ENCODE measurements at regions of chr1 and their contacts with region 1.

Region 1: DNA sequence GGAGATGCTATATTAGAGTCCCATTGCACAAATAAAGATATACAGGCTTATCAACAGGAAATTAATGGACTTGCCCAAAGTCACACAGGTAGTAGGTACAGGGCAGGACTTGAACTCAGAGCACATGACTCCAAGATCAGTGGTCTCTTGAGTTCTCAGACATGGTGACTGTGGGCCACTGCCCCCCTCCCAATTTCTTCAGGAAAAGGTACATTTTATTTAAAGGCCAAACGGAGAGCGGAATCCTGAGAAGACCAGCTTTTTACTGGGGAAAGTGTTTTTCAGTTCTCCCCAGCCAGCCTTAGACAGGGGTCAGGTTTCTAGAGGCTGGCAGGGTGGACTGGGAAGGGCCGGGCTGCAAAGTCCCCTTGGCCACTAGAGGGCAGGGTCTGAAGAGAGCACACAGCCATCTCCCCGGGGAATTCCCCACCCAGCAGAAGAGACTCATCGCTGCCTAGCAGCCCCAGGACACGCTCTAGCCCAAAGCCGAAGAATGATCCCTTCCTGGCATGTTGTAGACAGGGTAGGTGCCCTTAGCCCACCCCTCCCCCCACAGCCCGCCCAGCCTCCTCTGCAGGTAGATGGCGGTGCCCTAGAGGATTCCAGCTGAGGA is 29.7 kb downstream of the ACP6 start:
- DNase-seq: peak; percentile 91
- ATAC-seq: peak; percentile 99
- H3K4me3 Mint-ChIP-seq: no peak overlapping the region
- H3K27ac Mint-ChIP-seq: no peak overlapping the region
- H3K4me1 Mint-ChIP-seq: peaks cover 24% of the 10 kb centered on the region
- H3K27me3 Mint-ChIP-seq: no peaks in the 10 kb centered on the region

Region 2: DNA sequence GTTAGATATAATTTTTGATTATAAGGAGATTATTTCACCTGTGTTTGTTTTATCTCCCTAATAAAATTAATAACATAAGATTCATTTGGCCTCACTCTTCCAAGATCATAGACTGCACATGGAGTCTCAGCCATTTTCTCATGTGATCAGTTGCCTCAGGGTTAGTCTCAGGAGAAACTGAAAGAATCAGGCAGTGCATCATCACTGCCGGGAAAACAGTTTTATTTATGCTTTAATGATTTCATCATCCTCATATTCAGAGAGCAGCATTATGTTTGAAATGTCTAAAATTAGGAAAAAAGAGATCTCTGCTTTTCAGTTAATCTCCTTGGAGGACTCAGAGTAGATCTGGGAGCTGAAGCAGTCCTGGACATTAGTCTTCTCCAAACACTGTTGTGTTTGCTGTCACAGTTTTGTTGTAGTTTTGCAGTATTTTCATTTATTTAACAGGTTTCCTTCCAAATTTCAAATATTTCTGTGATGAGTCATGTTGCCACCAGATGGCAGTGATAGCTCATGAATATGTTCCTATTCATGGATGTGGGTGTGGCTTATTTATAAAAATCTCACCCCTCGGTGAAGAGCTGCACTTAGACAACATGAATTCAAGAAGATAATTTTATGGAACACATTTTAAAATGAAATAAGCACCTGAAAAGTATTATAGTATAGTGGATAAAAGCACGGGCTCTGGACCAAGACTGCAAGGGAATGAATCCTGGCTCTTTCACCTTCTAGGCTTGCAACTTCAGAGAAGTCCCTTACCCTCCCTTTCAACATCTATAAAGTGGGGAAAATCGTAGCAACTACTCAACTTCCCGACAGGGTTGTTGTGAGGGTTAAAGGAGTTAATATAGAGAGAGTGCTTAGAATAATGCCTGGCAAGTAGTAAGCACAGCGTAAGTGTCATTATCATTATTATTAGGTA is 367.0 kb before region 1 on chr1:
- CTCF ChIA-PET with region 1: no interaction called
- POLR2A ChIA-PET with region 1: no interaction called
- intact Hi-C with region 1: loop called (anchors 5 to 10 kb)
- DNase-seq: peak; percentile 37
- ATAC-seq: peak; percentile 47
- H3K4me3 Mint-ChIP-seq: no peak overlapping the region
- H3K27ac Mint-ChIP-seq: no peak overlapping the region
- H3K4me1 Mint-ChIP-seq: peaks cover 6% of the 10 kb centered on the region
- H3K27me3 Mint-ChIP-seq: no peaks in the 10 kb centered on the region

Region 3: DNA sequence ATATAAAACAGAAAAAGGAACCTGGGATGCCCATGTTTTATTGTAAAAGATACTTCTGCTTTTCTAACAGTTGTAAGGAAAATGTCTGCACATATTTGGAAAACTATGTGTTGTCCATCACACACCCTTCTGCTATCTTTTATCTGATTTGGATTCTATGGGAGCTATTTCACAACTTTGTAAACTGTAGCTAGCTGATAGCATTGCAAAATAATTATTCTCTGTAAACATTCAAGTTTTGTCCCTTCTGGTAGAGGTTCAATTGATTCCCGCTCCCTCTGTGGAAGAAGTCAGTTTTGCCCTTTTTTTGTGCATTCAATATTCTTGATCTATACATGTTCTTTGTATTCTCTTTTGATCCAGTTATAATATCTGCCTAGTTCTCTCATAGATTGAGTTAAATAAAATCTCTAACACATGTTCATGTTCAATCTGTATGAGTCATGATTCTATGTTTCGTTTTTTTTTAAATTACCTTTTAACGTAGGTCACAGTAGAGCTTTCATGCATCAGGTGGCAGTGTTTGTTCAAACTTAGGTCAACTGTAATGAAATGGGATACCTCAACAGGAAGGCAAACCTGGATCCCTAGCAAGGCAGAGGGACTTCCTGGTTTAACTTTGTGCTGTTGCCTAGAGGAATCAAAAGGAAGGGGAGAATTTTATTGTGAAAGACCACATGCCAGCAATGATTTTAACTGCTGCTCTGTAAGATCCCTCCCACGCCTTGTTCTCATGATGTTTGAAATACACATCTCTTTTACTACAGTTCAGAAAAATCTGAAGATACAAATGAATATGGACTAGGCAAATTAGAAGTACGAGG is 125.4 kb before region 1 on chr1:
- CTCF ChIA-PET with region 1: interaction called, 5 read pairs
- POLR2A ChIA-PET with region 1: no interaction called
- intact Hi-C with region 1: loop called (anchors 1 to 5 kb)
- DNase-seq: peak; percentile 26
- ATAC-seq: peak; percentile 94
- H3K4me3 Mint-ChIP-seq: no peak overlapping the region
- H3K27ac Mint-ChIP-seq: peak overlapping the region; percentile 61
- H3K4me1 Mint-ChIP-seq: peaks cover 18% of the 10 kb centered on the region
- H3K27me3 Mint-ChIP-seq: no peaks in the 10 kb centered on the region

Region 4: DNA sequence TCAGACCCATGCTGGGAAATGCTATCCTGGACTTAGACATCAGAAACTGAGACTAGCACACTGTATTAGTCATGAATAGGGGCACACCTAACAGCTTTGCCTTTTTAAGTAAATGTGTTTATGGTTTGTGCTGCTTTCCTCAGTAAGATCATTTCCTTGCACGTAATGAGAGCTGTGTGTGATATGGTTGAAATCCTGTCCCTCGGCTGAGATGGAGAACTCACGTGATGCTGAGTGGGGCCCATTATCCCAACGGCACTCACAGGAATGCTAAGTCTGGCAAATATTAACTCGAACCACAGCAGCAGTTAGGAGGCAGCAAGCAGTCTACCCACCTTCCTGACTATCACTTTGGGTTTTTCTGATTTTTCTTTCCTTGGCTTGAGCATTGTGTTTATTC is 61.1 kb before region 1 on chr1:
- CTCF ChIA-PET with region 1: no interaction called
- POLR2A ChIA-PET with region 1: no interaction called
- intact Hi-C with region 1: no loop called
- DNase-seq: no peak
- ATAC-seq: peak; percentile 79
- H3K4me3 Mint-ChIP-seq: peak overlapping the region; percentile 30
- H3K27ac Mint-ChIP-seq: peak overlapping the region; percentile 79
- H3K4me1 Mint-ChIP-seq: peaks cover 48% of the 10 kb centered on the region
- H3K27me3 Mint-ChIP-seq: peaks cover 10% of the 10 kb centered on the region

Region 5: GRCh38 chr1:147627435-147628110 is 13.1 kb before region 1 on chr1:
- CTCF ChIA-PET with region 1: interaction called, 16 read pairs
- POLR2A ChIA-PET with region 1: no interaction called
- intact Hi-C with region 1: no loop called
- DNase-seq: peak; percentile 72
- ATAC-seq: peak; percentile 78
- H3K4me3 Mint-ChIP-seq: no peak overlapping the region
- H3K27ac Mint-ChIP-seq: peak overlapping the region; percentile 29
- H3K4me1 Mint-ChIP-seq: peaks cover 35% of the 10 kb centered on the region
- H3K27me3 Mint-ChIP-seq: no peaks in the 10 kb centered on the region

Region 6: DNA sequence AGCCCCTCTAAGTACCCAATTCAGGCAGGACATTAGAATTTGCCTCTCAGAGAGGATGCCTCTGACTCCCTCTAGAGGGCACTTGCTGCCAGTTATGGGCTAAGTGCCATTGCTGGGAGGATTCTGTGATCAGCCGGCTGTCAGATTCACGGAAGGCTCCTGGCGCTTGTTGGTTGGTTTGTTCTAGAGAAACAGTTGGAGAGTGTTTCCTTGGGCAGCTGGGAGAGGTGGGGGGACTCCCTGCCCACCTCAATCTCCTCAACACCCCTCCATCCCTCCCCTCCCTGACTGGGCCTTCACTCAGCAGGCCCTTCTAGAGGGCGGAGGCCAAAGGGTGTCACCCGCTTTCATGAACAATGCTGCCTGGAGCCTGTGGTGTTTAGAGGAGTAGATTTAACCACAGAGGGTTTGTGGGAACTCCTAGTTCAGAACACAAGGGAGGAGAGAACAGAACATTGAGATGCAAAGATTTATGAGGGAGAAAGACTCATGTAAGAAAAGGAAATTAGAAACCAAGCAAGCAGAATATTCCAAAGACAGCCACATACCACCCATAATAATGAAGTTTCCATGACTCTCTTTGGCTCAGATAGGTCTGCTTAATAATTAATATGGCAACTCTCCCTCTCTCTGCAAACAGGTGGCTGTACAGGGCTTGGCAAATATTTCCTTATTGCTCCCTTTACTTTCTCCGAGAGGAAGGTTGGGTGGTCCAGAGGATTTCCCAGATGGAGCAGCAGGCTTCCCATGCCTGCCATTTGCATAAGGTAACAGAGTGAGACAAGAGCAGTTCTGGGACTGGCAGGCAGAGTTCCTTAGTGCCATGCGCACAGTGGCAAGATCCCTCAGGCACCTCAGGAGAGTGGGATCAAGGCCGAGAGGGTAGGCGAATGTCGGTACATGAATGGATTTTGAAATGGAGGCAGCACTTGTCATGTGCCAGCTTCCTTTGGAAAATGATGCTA is 59.7 kb after region 1 on chr1:
- CTCF ChIA-PET with region 1: interaction called, 4 read pairs
- POLR2A ChIA-PET with region 1: no interaction called
- intact Hi-C with region 1: loop called (anchors 2 to 10 kb)
- DNase-seq: peak; percentile 74
- ATAC-seq: peak; percentile 97
- H3K4me3 Mint-ChIP-seq: no peak overlapping the region
- H3K27ac Mint-ChIP-seq: peak overlapping the region; percentile 66
- H3K4me1 Mint-ChIP-seq: peaks cover 10% of the 10 kb centered on the region
- H3K27me3 Mint-ChIP-seq: peaks cover 2% of the 10 kb centered on the region